GM12878 (cell line): ENCODE measurements at regions of chr4 and their contacts with region 1.

Region 1: DNA sequence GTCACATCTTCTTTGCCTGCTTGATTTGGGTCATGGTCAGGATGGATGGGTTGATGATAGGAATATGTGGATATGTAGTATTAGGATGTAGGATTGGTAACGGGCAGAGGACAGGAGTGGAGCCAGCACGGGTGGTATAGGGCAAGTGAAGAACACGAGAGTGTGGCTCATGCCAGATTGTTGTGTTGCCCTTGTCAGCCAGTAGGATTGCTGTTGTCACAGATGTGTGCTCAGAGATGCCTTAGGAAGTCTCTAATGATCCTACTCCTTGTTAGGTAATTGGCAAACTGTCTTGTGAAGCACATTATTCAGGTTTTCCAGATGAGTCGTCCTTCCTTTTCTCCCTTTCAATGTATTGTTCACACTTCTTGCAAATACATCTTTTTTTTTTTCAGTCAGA is 5.5 kb downstream of the ATP10D start:
- DNase-seq: no peak
- ATAC-seq: peak; percentile 86
- H3K4me3 ChIP-seq: no peak overlapping the region
- H3K27ac ChIP-seq: no peak overlapping the region
- H3K4me1 ChIP-seq: peaks cover 10% of the 10 kb centered on the region
- H3K27me3 ChIP-seq: no peaks in the 10 kb centered on the region
- CTCF ChIP-seq: peak; percentile 75 to 78 (median 75)
- EP300 ChIP-seq: no peak
- POLR2A ChIP-seq: no peak
- RAD21 ChIP-seq: peak; percentile 62

Region 2: GRCh38 chr4:47463235-47463956 is 27.2 kb before region 1 on chr4 and contains the start of gene COMMD8:
- CTCF ChIA-PET with region 1: interaction called, 79 read pairs
- POLR2A ChIA-PET with region 1: interaction called, 21 read pairs
- RAD21 ChIA-PET with region 1: interaction called, 84 read pairs
- SMC1A ChIA-PET with region 1: interaction called, 126 read pairs
- in situ Hi-C with region 1: no loop called
- intact Hi-C with region 1: loop called (anchors 1 kb)
- DNase-seq: peak; percentile 91
- ATAC-seq: peak; percentile 87
- H3K4me3 ChIP-seq: peak within 1 kb of the TSS; percentile 92
- H3K27ac ChIP-seq: peak within 1 kb of the TSS; percentile 79
- H3K4me1 ChIP-seq: peaks cover 22% of the 10 kb centered on the region
- H3K27me3 ChIP-seq: no peaks in the 10 kb centered on the region
- CTCF ChIP-seq: peak; percentile 22 to 41 (median 34); a peak in 5 of 6 replicates
- EP300 ChIP-seq: peak in 1 of 2 experiments; percentile 25; a peak in 1 of 4 replicates
- POLR2A ChIP-seq: peak; percentile 96
- RAD21 ChIP-seq: peak; percentile 1; the same call in 1 of the 2 replicates
- polyA plus RNA-seq, gene COMMD8: 126 to 152 TPM

Region 3: DNA sequence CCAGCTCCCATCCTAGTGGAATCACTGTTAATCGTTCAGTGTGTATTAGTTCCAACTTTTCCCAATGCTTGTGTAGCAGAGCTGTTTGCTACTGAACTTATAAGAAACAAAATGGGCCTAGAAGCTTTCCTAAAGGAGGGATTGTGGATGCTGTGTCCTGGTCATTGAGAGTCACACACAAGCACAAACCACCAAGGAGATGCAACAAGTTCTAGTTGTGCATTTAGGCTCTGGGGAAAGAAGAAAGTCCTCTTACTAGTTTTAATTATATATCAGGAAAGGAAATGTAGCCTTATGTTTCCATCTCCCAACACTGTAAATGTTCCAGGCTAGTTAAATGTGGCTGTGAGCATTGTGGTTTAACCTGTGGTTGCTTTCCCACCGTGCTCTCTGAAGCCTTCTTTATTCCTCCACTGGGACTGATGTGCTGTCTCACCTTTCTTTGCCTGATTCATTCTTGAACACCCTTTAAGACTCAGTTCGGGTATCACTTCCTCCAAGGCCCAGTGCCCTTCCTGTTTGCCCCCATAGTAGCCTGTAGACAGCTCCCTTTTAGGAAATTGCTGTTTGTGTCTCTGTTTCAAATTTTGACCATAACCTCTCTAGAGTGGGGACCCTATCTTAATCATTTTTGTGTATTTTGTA is 28.8 kb after region 1 on chr4:
- CTCF ChIA-PET with region 1: interaction called, 12 read pairs
- POLR2A ChIA-PET with region 1: interaction called, 13 read pairs
- RAD21 ChIA-PET with region 1: interaction called, 34 read pairs
- SMC1A ChIA-PET with region 1: interaction called, 239 read pairs
- in situ Hi-C with region 1: no loop called
- intact Hi-C with region 1: loop called (anchors 2 kb)
- DNase-seq: peak; percentile 81
- ATAC-seq: peak; percentile 99
- H3K4me3 ChIP-seq: no peak overlapping the region; the same call in 1 of the 2 replicates
- H3K27ac ChIP-seq: peak overlapping the region; percentile 77
- H3K4me1 ChIP-seq: peaks cover 17% of the 10 kb centered on the region
- H3K27me3 ChIP-seq: no peaks in the 10 kb centered on the region
- CTCF ChIP-seq: no peak
- EP300 ChIP-seq: peak in 1 of 2 experiments; percentile 87; a peak in 2 of 4 replicates
- POLR2A ChIP-seq: no peak
- RAD21 ChIP-seq: no peak; the same call in 1 of the 2 replicates

Region 4: DNA sequence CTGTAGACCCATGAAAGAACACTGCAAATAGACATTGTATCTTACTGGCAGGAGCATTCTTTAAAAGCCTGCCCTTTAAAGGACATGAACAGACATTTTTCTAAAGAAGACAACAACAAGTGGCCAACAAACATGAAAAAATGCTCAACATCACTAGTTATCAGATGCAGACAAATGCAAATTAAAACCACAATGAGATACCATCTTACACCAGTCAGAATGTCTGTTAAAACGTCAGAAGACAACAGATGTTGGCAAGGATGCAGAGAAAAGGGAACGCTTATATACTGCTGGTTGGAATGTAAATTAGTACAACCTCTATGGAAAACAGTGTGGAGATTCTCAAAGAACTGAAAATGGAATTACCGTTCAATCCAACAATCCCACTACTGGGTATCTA is 71.7 kb after region 1 on chr4:
- CTCF ChIA-PET with region 1: interaction called, 26 read pairs
- POLR2A ChIA-PET with region 1: interaction called, 6 read pairs
- RAD21 ChIA-PET with region 1: interaction called, 24 read pairs
- SMC1A ChIA-PET with region 1: interaction called, 27 read pairs
- in situ Hi-C with region 1: no loop called
- intact Hi-C with region 1: loop called (anchors 1 kb)
- DNase-seq: no peak
- ATAC-seq: no peak
- H3K4me3 ChIP-seq: no peak overlapping the region
- H3K27ac ChIP-seq: no peak overlapping the region
- H3K4me1 ChIP-seq: peaks cover 5% of the 10 kb centered on the region; the same call in 1 of the 2 replicates
- H3K27me3 ChIP-seq: no peaks in the 10 kb centered on the region; a peak in 1 of 4 replicates
- CTCF ChIP-seq: no peak
- EP300 ChIP-seq: no peak
- POLR2A ChIP-seq: no peak
- RAD21 ChIP-seq: no peak

Region 5: GRCh38 chr4:47639531-47639930 is 149.0 kb after region 1 on chr4:
- CTCF ChIA-PET with region 1: no interaction called
- POLR2A ChIA-PET with region 1: no interaction called
- RAD21 ChIA-PET with region 1: no interaction called
- SMC1A ChIA-PET with region 1: no interaction called
- in situ Hi-C with region 1: no loop called
- intact Hi-C with region 1: no loop called
- DNase-seq: no peak
- ATAC-seq: no peak
- H3K4me3 ChIP-seq: no peak overlapping the region
- H3K27ac ChIP-seq: no peak overlapping the region
- H3K4me1 ChIP-seq: no peaks in the 10 kb centered on the region
- H3K27me3 ChIP-seq: no peaks in the 10 kb centered on the region
- CTCF ChIP-seq: no peak
- EP300 ChIP-seq: no peak
- POLR2A ChIP-seq: no peak
- RAD21 ChIP-seq: no peak

Region 6: DNA sequence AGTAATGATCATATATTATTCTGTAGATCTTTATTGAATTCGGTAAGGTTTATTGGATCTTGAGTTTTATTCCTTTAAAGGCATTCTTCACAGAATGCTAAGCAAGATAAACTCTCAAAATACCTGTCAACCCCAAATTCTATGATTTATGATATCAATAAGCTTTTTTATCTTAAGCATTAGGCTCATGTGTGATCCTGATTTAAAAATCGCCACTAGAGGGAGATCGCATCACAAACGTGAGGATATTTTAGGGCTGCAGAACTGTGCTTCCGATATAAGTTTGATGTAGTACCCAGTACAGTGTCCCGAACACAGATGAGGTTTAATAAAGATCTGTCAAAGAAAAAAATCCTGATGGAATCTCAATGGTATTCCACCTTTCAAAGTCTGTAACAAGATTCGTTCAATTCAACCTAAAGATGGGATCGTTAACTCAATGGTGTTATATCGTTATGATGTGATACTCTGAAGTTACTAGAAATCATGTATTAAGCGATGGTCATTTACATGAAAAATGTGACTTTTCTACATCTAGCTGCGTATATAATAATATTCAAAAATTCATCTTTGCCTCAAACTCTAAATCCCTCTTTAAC is 178.4 kb after region 1 on chr4:
- CTCF ChIA-PET with region 1: interaction called, 5 read pairs
- POLR2A ChIA-PET with region 1: interaction called, 4 read pairs
- RAD21 ChIA-PET with region 1: no interaction called
- SMC1A ChIA-PET with region 1: interaction called, 5 read pairs
- in situ Hi-C with region 1: no loop called
- intact Hi-C with region 1: loop called (anchors 5 kb)
- DNase-seq: no peak
- ATAC-seq: peak; percentile 90
- H3K4me3 ChIP-seq: no peak overlapping the region
- H3K27ac ChIP-seq: no peak overlapping the region
- H3K4me1 ChIP-seq: no peaks in the 10 kb centered on the region
- H3K27me3 ChIP-seq: no peaks in the 10 kb centered on the region; a peak in 1 of 4 replicates
- CTCF ChIP-seq: peak; percentile 62 to 78 (median 63); a peak in 5 of 6 replicates
- EP300 ChIP-seq: no peak
- POLR2A ChIP-seq: no peak
- RAD21 ChIP-seq: peak; percentile 64

Region 7: GRCh38 chr4:48033825-48034413 is 543.4 kb after region 1 on chr4:
- CTCF ChIA-PET with region 1: no interaction called
- POLR2A ChIA-PET with region 1: no interaction called
- RAD21 ChIA-PET with region 1: interaction called, 3 read pairs
- SMC1A ChIA-PET with region 1: interaction called, 3 read pairs
- in situ Hi-C with region 1: no loop called
- intact Hi-C with region 1: loop called (anchors 10 kb)
- DNase-seq: no peak
- ATAC-seq: peak; percentile 74
- H3K4me3 ChIP-seq: no peak overlapping the region
- H3K27ac ChIP-seq: peak overlapping the region; percentile 20; the same call in 1 of the 2 replicates
- H3K4me1 ChIP-seq: peaks cover 48% of the 10 kb centered on the region
- H3K27me3 ChIP-seq: no peaks in the 10 kb centered on the region
- CTCF ChIP-seq: peak; percentile 45 to 63 (median 60)
- EP300 ChIP-seq: no peak
- POLR2A ChIP-seq: no peak
- RAD21 ChIP-seq: peak; percentile 56